Activated naive CD4-positive, alpha-beta T cell treated with anti-CD3 and anti-CD28 coated beads for 36 hours (primary cell): ENCODE measurements at regions of chr2 and their contacts with region 1.

Region 1: DNA sequence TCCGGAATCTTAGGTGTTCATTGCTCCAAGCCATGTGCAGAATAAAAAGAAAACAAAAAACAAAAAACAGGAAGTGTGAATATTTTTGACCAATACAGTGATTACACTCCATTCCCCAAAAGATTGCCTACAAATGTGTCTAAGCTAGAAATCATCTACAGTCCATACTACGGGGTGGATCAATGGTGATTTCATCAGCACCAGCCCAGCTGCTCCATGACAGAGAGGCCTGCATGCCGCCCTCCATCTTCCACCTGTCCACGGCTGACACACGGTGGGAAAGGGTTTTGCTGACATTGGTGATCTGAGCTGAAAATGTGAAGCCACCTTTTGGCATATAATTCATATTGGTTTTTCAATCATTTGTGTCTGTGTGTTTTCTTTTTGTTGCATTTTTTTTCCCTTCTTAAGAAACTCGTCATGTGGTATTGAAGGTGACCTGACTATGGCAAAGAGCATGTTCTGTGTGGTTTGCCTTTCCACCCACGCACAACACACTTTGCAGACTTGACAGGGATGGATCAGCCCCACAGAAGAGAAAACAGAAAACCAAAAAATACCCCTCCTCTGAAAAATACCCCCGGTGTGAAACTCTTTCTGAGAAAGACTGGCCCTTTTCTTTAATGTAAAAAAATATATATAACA is 533.1 kb downstream of the RNF144A start:
- DNase-seq: peak; percentile 75
- H3K4me3 Mint-ChIP-seq: peak overlapping the region; percentile 41
- H3K27ac Mint-ChIP-seq: peak overlapping the region; percentile 88
- H3K4me1 Mint-ChIP-seq: peaks cover 66% of the 10 kb centered on the region
- H3K27me3 Mint-ChIP-seq: no peaks in the 10 kb centered on the region

Region 2: GRCh38 chr2:7467782-7468447 is 17.6 kb after region 1 on chr2:
- CTCF ChIA-PET with region 1: interaction called, 4 read pairs
- intact Hi-C with region 1: loop called (anchors 1 kb)
- DNase-seq: peak; percentile 68
- H3K4me3 Mint-ChIP-seq: no peak overlapping the region
- H3K27ac Mint-ChIP-seq: peak overlapping the region; percentile 83
- H3K4me1 Mint-ChIP-seq: peaks cover 45% of the 10 kb centered on the region
- H3K27me3 Mint-ChIP-seq: no peaks in the 10 kb centered on the region